Endothelial cell of umbilical vein (primary cell): ENCODE measurements at regions of chr1 and their contacts with region 1.

Region 1: GRCh38 chr1:87392248-87393192 is 63.8 kb downstream of the LMO4 start:
- DNase-seq: peak; percentile 42
- H3K4me3 ChIP-seq: no peak overlapping the region
- H3K27ac ChIP-seq: no peak overlapping the region
- H3K4me1 ChIP-seq: peaks cover 5% of the 10 kb centered on the region
- H3K27me3 ChIP-seq: no peaks in the 10 kb centered on the region
- CTCF ChIP-seq: no peak
- POLR2A ChIP-seq: no peak

Region 2: GRCh38 chr1:87335175-87335884 is 57.2 kb before region 1 on chr1:
- CTCF ChIA-PET with region 1: no interaction called
- POLR2A ChIA-PET with region 1: no interaction called
- dilution Hi-C with region 1: no loop called
- intact Hi-C with region 1: loop called (anchors 2 kb)
- DNase-seq: peak; percentile 42
- H3K4me3 ChIP-seq: peak overlapping the region; percentile 61 to 88 (median 63)
- H3K27ac ChIP-seq: peak overlapping the region; percentile 66
- H3K4me1 ChIP-seq: peaks cover 20% of the 10 kb centered on the region
- H3K27me3 ChIP-seq: no peaks in the 10 kb centered on the region
- CTCF ChIP-seq: peak in 1 of 2 donors; percentile 40
- POLR2A ChIP-seq: peak; percentile 54

Region 3: GRCh38 chr1:87410776-87411480 is 18.4 kb after region 1 on chr1:
- CTCF ChIA-PET with region 1: no interaction called
- POLR2A ChIA-PET with region 1: no interaction called
- dilution Hi-C with region 1: no loop called
- intact Hi-C with region 1: no loop called
- DNase-seq: no peak
- H3K4me3 ChIP-seq: no peak overlapping the region
- H3K27ac ChIP-seq: no peak overlapping the region
- H3K4me1 ChIP-seq: no peaks in the 10 kb centered on the region
- H3K27me3 ChIP-seq: no peaks in the 10 kb centered on the region
- CTCF ChIP-seq: no peak
- POLR2A ChIP-seq: no peak

Region 4: DNA sequence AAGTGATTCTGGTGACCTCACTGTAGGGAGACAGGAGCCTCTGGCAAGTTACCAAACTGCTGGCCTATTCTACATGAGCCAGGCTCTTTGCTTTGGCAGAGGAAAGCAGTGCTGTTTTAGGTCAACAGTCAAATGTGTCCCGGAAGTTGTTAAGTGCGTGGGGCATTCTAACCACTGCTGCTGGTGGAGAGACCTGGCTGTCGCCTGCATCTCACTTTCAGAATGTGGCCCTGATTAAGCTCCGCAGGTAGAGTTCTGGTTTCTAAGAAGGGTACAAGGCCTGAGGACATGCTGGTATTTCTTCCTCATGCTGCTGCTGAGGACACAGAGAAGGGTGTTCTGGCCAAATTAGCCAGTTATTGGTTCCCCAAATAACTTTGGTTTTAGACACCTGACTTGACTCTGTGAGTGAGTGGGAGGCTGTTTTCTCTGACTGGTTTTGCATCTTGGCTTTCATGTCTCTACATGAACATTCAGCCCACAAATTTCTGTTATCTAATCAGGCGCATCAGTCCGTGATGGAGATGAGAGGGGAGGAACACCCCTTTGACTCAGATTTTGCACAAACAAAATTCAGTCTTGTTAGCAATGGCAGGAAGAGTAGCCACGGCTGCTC is 56.9 kb after region 1 on chr1:
- CTCF ChIA-PET with region 1: no interaction called
- POLR2A ChIA-PET with region 1: no interaction called
- dilution Hi-C with region 1: no loop called
- intact Hi-C with region 1: no loop called
- DNase-seq: no peak
- H3K4me3 ChIP-seq: no peak overlapping the region
- H3K27ac ChIP-seq: no peak overlapping the region
- H3K4me1 ChIP-seq: no peaks in the 10 kb centered on the region
- H3K27me3 ChIP-seq: no peaks in the 10 kb centered on the region
- CTCF ChIP-seq: no peak
- POLR2A ChIP-seq: no peak

Region 5: GRCh38 chr1:87473203-87473661 is 80.7 kb after region 1 on chr1:
- CTCF ChIA-PET with region 1: no interaction called
- POLR2A ChIA-PET with region 1: no interaction called
- dilution Hi-C with region 1: no loop called
- intact Hi-C with region 1: loop called (anchors 5 kb)
- DNase-seq: peak; percentile 17
- H3K4me3 ChIP-seq: no peak overlapping the region
- H3K27ac ChIP-seq: no peak overlapping the region
- H3K4me1 ChIP-seq: peaks cover 9% of the 10 kb centered on the region
- H3K27me3 ChIP-seq: no peaks in the 10 kb centered on the region
- CTCF ChIP-seq: no peak
- POLR2A ChIP-seq: no peak

Region 6: GRCh38 chr1:87644579-87645190 is 252.2 kb after region 1 on chr1:
- CTCF ChIA-PET with region 1: no interaction called
- POLR2A ChIA-PET with region 1: no interaction called
- dilution Hi-C with region 1: no loop called
- intact Hi-C with region 1: no loop called
- DNase-seq: no peak
- H3K4me3 ChIP-seq: no peak overlapping the region
- H3K27ac ChIP-seq: no peak overlapping the region
- H3K4me1 ChIP-seq: no peaks in the 10 kb centered on the region
- H3K27me3 ChIP-seq: no peaks in the 10 kb centered on the region
- CTCF ChIP-seq: no peak
- POLR2A ChIP-seq: no peak